ENCODE measurements at regions of chr20 and their contacts with region 1.

Region 1: GRCh38 chr20:31760519-31761240 is 21.6 kb downstream of the TPX2 start:
- DNase-seq: peak; percentile 18
- ATAC-seq: peak; percentile 87
- H3K4me3 ChIP-seq: no peak overlapping the region
- H3K27ac ChIP-seq: no peak overlapping the region
- H3K4me1 ChIP-seq: no peaks in the 10 kb centered on the region
- H3K27me3 ChIP-seq: no peaks in the 10 kb centered on the region
- CTCF ChIP-seq: no peak

Region 2: DNA sequence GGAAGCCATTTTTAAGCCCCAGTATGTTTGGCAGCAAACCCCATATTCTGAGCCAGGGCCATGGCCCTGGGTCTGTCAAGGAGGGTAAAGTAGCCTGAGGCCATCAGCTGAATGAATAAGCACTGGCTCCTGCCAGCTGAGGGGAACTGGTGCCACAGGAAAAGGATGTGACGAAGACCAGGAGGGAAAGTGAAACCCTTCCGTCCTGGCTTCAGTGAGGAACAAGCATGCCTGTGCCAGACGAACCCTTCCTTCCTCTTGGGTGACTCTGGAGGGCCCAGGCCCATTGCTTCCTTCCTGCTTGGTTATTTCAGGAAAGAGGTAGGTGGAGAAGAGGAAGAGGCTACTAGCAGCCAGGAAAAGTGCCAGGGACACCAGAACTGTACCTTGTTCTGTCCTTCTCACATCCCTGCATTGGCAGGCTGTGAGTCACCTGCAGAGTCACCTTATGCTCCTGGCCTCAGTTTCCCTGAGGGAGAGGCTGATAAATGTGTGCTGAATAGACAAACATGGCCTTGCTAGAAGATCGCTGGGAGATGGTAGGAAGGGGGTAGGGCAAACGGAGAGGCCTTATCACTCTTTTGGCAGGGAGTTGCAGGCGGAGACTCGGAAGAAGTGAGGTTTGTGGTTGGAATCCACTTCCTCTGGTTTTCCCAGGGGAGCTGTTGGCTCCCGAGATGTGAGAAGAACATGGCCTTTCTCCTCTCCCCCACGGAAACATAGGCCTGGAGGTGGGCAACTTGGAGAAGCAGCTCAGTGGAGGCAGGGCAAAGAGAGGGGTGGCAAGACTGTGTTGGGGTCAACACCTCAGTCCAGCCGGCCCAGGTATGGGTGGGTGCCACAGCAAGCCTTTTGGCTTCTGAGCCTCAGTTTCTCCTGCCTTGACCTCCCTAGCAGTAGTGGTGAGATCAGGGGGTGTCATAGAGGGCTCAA is 85.5 kb before region 1 on chr20:
- CTCF ChIA-PET with region 1: interaction called, 10 read pairs
- POLR2A ChIA-PET with region 1: no interaction called
- intact Hi-C with region 1: no loop called
- DNase-seq: peak; percentile 86
- ATAC-seq: peak; percentile 71
- H3K4me3 ChIP-seq: no peak overlapping the region
- H3K27ac ChIP-seq: peak overlapping the region; percentile 57
- H3K4me1 ChIP-seq: peaks cover 26% of the 10 kb centered on the region
- H3K27me3 ChIP-seq: no peaks in the 10 kb centered on the region
- CTCF ChIP-seq: no peak

Region 3: DNA sequence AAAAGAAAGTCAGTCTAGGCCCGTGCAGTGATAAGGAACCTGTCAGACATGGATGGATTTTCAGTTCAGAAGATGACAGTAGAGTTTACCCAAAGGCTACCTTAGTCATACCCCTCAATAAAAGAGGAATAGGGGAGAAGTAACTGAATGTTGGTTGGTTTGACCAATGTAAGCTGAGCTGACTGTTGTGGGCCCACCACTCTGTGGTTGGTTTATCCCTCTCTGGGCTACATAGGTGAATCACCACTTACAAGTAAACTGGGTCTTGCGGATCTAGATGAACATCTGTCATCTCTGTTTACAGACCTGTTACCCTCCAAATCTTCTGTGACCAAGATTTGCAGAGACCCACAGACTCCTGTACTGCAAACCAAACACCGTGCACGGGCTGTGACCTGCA is 21.3 kb after region 1 on chr20:
- CTCF ChIA-PET with region 1: no interaction called
- POLR2A ChIA-PET with region 1: no interaction called
- intact Hi-C with region 1: no loop called
- DNase-seq: no peak
- ATAC-seq: peak; percentile 33
- H3K4me3 ChIP-seq: no peak overlapping the region
- H3K27ac ChIP-seq: no peak overlapping the region
- H3K4me1 ChIP-seq: no peaks in the 10 kb centered on the region
- H3K27me3 ChIP-seq: no peaks in the 10 kb centered on the region
- CTCF ChIP-seq: no peak